GM12878 (cell line): ENCODE measurements at regions of chr2 and their contacts with region 1.

Region 1: DNA sequence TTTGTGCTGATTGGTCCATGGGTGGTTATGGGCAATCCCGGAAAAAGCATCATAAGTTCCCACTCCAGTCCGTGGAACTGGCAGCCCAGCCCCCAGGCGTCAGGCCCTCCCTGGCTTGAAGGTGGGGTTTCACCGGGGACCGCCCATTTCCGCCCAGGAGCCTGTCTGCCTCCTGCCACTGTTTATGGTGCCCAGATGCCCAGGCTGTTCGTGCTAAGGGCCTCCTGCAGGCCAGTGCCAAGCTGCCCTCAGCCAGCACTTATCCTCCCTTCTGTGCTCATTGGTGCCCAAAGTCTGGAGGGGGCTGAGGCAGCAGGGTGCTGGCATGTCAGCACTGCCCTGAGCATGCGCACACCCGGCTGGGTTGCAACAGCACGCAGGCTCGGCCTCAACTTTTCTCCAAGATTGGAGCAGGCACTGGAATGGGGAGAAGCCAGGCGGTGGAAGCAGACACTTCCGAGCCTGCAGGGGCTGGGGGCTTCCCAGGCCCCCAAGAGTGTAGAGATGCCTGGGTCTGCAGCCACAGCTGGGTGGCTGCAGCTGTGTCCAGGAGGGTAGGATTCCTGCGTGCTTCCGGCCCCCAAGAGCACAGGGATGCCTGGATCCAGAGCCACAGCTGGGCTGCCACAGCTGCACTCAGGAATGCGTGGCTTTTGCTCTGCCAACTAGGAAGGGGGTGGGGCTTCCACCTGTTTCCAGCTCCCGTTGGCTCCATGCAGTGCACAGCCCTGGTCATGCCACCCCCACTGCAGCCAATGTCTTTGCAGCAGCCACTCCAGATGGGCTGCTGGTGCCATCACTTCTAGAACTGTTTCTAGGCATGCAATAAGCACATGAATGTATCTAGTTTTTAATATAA is 74.0 kb downstream of the AGPS start:
- DNase-seq: no peak
- ATAC-seq: no peak; the same call in 2 of the 3 replicates
- H3K4me3 ChIP-seq: no peak overlapping the region
- H3K27ac ChIP-seq: no peak overlapping the region
- H3K4me1 ChIP-seq: no peaks in the 10 kb centered on the region
- H3K27me3 ChIP-seq: no peaks in the 10 kb centered on the region
- CTCF ChIP-seq: no peak
- EP300 ChIP-seq: no peak
- POLR2A ChIP-seq: no peak
- RAD21 ChIP-seq: no peak

Region 2: DNA sequence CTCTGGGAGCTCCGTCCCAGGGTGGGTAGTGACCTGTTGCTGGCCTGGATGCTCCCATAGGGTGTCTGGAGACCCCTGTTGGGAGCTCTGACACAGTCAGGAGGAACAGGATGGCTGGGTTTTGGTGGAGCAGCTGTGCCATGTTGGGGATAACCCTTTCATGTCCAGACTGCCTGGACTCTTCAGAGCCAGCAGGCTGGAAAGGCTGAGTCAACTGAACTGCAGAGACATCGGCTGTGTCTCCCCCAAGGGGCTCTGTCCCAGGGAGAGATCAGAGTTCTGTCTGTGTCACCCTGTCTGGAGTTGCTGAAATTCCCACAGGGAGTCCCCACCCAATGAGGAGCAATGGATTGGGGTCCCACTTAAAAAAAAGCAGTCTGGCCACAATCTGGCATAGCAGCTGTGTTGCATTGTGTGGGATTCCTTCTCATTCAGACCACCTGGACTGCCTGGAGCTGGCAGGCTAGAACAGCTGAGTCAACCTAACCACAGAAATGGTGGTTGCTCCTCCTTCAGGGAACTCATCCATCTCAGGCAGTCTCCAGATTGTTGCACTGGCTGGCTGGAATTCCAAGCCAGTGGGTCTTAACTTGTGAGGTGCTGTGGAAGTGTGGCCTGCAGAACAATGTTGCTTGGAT is 36.8 kb before region 1 on chr2:
- CTCF ChIA-PET with region 1: no interaction called
- POLR2A ChIA-PET with region 1: interaction called, 12 read pairs
- RAD21 ChIA-PET with region 1: no interaction called
- SMC1A ChIA-PET with region 1: no interaction called
- in situ Hi-C with region 1: no loop called
- intact Hi-C with region 1: no loop called
- DNase-seq: no peak
- ATAC-seq: no peak
- H3K4me3 ChIP-seq: no peak overlapping the region
- H3K27ac ChIP-seq: no peak overlapping the region
- H3K4me1 ChIP-seq: no peaks in the 10 kb centered on the region
- H3K27me3 ChIP-seq: no peaks in the 10 kb centered on the region
- CTCF ChIP-seq: no peak
- EP300 ChIP-seq: no peak
- POLR2A ChIP-seq: no peak
- RAD21 ChIP-seq: no peak

Region 3: GRCh38 chr2:177520356-177520723 is 53.8 kb after region 1 on chr2:
- CTCF ChIA-PET with region 1: no interaction called
- POLR2A ChIA-PET with region 1: no interaction called
- RAD21 ChIA-PET with region 1: no interaction called
- SMC1A ChIA-PET with region 1: no interaction called
- in situ Hi-C with region 1: no loop called
- intact Hi-C with region 1: no loop called
- DNase-seq: no peak
- ATAC-seq: no peak
- H3K4me3 ChIP-seq: no peak overlapping the region
- H3K27ac ChIP-seq: no peak overlapping the region
- H3K4me1 ChIP-seq: no peaks in the 10 kb centered on the region
- H3K27me3 ChIP-seq: no peaks in the 10 kb centered on the region
- CTCF ChIP-seq: no peak
- EP300 ChIP-seq: no peak
- POLR2A ChIP-seq: no peak
- RAD21 ChIP-seq: no peak